ENCODE measurements at regions of chr14 and their contacts with region 1.

Region 1: GRCh38 chr14:105045710-105046326 is 19.4 kb downstream of the GPR132 start:
- DNase-seq: peak; percentile 91 to 94
- ATAC-seq: peak; percentile 95 to 99 (median 97)
- H3K4me3 ChIP-seq: peak overlapping the region; percentile 18
- H3K27ac ChIP-seq: no peak overlapping the region
- H3K4me1 ChIP-seq: no peaks in the 10 kb centered on the region
- H3K27me3 ChIP-seq: peaks cover 0 to 6% (median 6%) of the 10 kb centered on the region in 3 donors
- CTCF ChIP-seq: peak; percentile 100

Region 2: DNA sequence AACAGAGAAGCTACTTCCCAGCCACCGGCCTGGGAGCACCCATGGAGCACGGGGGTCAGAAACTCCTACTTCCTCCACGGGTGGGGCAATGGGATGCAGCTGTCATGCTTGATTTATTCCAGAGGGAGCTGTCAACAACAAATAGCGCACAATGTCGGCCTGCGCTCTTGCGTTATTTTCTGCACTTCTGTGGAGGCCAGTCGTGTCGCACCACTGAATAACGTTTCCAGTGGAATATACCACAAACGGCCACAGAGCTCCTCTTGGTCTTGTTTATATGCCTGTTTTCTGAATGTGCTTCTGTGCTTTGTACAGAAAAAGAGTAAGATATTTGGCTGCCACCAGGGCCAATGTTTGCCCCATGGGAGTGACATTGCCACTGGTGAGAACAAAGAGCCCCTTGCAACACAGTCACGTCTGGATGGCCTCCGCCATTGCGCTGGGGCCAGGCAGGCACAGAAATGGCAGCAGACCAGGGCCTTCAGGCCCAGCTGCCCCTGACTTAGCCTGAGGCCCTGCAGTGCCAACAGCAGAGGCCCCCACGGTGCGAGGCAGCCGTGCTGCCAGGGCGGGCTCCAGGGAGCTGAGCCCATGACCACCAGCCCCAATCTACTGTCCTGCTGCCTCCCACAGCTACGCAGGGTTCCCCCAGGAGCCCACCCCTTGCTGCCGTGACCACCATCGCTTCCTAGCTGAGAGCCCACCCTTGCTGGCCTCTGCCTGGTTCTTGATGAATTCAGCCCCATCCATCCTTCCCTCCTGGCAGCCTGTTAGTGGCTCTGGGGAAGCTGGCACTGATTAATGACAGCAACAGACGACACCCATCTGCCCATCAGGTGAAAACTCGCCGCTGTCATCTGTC is 412.3 kb before region 1 on chr14:
- intact Hi-C with region 1: no loop called
- DNase-seq: no peak
- ATAC-seq: no peak
- H3K4me3 ChIP-seq: no peak overlapping the region
- H3K27ac ChIP-seq: no peak overlapping the region
- H3K4me1 ChIP-seq: no peaks in the 10 kb centered on the region
- H3K27me3 ChIP-seq: peaks cover 0 to 42% (median 9%) of the 10 kb centered on the region in 3 donors
- CTCF ChIP-seq: no peak

Region 3: DNA sequence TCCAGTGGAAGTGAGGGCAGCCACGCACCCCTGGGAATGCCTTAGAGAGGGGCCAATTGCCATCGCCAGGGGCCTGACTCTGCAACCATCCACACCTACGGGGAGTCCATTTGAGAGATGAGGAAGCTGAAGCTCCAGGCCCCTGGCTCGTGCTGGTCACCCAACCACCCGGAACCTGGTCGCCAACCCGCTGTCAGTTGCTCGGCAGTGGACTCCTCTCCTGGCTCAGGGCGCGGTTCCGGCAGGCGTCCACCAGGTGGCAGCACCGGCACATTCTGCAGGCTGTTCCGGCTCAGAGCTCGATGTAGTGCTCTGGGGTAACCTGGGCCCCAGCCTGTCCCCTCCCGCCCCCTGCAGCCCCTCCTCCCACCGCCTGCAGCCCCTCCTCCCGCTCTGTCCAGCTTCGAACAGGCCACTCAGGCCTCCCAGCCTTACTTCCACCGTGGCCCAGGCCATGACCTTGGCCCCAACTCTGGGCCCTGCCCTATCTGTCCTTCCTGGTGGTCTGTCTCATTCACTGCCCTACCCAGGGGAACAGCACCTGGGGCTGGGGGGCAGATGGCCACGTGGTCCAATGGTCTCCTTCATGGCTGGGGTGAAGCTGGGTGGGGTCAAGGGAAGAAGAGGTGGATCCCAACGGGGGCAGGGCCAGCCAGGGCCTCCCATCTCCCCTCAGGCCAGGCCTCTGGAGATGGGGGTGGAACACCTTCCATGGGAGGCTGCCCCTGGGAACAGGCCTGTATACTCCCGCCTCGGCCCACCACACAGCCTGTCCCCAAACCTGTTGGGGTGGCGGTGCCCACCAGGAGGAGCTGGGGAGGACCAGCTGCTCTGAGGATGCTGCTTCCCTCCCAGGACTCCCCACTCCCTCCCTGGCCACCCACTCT is 277.1 kb before region 1 on chr14:
- intact Hi-C with region 1: loop called in 1 of 2 experiments (anchors 5 kb)
- DNase-seq: peak; percentile 91 to 93
- ATAC-seq: peak; percentile 89 to 95 (median 92)
- H3K4me3 ChIP-seq: no peak overlapping the region
- H3K27ac ChIP-seq: no peak overlapping the region
- H3K4me1 ChIP-seq: no peaks in the 10 kb centered on the region
- H3K27me3 ChIP-seq: no peaks in the 10 kb centered on the region
- CTCF ChIP-seq: peak; percentile 94

Region 4: DNA sequence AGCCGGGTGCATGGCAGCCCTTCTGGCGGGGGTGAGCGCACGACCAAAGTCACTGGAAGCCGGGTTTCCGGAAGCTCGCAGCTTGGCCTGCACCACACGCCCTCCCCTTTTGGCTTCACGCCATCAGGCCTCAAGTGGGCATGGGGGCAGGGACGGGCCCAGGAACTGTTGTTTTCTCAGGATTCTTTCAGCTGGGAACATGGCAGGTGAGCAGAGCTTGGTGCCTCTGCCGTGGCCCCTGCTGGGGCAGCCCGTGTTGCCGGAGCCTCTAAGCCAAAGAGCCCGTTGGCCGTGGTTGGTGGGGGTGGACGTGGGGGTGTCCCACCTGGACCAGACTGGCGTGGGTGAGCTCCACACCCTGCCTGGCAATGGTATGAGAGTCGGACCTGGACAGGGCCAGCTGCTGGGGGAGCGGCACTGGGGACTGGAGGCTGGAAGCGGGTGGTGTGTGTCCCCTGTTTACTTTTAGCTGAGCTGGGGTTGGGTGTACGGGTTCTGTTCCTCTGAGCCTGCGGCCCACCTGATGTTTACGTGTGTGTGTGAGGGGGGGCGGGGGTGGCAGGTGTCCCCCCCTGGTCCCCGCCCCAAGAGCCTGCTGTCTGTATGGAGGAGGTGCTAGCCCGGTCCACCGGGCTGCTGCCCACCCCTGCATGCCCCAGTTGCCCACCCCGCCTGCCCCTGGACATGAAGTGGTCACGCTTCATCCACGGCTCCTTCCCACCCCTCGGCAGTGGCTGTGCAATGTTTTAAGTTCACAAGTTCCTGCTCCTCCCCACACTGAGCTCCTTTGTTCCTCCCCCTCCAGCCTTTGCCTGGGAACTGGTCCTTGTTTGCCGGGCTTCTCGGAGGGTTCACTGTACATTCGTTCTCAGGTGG is 149.8 kb before region 1 on chr14:
- intact Hi-C with region 1: loop called in 1 of 2 experiments (anchors 1 kb)
- DNase-seq: peak; percentile 23 to 48
- ATAC-seq: peak in 1 of 4 donors; percentile 15
- H3K4me3 ChIP-seq: no peak overlapping the region
- H3K27ac ChIP-seq: no peak overlapping the region
- H3K4me1 ChIP-seq: no peaks in the 10 kb centered on the region
- H3K27me3 ChIP-seq: no peaks in the 10 kb centered on the region
- CTCF ChIP-seq: no peak

Region 5: DNA sequence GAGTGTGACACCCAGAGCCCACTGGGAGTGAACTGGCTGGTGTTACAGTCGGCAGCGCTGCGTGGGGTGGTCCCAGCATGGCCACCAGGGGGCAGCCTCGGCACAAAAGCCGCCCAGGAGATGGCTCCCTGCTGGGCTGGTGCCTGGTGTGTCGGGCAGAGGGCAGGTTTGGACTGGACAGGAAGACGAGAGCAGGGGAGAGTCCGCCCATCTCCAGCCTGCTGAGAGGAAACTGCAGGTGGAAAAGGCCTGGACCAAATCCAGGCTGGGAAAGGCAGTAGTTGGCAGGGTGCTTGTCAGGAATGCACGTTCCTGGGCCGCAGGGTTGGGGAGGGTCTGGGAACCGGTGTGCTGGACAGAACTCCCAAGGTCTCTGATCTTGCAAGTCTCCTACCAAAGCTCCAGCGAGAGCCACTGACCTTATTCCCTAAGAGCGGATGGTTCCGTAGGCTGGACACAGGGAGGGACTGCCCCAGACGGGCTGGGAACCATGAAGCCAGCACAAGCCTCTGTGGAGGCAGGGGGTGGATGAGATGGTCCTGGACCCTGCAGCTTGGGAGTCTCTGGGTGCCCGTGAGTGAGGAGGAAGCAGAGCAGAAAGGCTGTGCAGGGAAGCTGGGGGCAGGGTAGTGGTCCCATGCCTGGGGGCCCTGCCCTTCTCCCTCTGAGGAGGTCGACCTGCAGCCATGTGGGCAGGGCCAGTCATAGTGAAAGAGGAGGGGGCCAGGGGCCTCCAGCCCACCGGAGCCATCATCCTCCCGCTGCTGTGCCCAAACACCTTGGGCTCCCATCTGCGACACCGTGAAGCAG is 69.4 kb before region 1 on chr14:
- intact Hi-C with region 1: loop called (anchors 1 kb)
- DNase-seq: peak; percentile 86 to 93
- ATAC-seq: peak; percentile 59 to 82 (median 70)
- H3K4me3 ChIP-seq: no peak overlapping the region
- H3K27ac ChIP-seq: no peak overlapping the region
- H3K4me1 ChIP-seq: peaks cover 43% of the 10 kb centered on the region
- H3K27me3 ChIP-seq: peaks cover 0 to 13% (median 0%) of the 10 kb centered on the region in 3 donors
- CTCF ChIP-seq: peak; percentile 95

Region 6: GRCh38 chr14:105640936-105641843 is 595.4 kb after region 1 on chr14:
- intact Hi-C with region 1: no loop called
- DNase-seq: no peak
- ATAC-seq: no peak
- H3K4me3 ChIP-seq: no peak overlapping the region
- H3K27ac ChIP-seq: no peak overlapping the region
- H3K4me1 ChIP-seq: no peaks in the 10 kb centered on the region
- H3K27me3 ChIP-seq: no peaks in the 10 kb centered on the region
- CTCF ChIP-seq: no peak